Activated naive CD8-positive, alpha-beta T cell treated with anti-CD3 and anti-CD28 coated beads, Interleukin-2, amount 10 ng/mL, durations not matched to agents 7 days and 5 days (primary cell): ENCODE measurements at regions of chr11 and their contacts with region 1.

Region 1: DNA sequence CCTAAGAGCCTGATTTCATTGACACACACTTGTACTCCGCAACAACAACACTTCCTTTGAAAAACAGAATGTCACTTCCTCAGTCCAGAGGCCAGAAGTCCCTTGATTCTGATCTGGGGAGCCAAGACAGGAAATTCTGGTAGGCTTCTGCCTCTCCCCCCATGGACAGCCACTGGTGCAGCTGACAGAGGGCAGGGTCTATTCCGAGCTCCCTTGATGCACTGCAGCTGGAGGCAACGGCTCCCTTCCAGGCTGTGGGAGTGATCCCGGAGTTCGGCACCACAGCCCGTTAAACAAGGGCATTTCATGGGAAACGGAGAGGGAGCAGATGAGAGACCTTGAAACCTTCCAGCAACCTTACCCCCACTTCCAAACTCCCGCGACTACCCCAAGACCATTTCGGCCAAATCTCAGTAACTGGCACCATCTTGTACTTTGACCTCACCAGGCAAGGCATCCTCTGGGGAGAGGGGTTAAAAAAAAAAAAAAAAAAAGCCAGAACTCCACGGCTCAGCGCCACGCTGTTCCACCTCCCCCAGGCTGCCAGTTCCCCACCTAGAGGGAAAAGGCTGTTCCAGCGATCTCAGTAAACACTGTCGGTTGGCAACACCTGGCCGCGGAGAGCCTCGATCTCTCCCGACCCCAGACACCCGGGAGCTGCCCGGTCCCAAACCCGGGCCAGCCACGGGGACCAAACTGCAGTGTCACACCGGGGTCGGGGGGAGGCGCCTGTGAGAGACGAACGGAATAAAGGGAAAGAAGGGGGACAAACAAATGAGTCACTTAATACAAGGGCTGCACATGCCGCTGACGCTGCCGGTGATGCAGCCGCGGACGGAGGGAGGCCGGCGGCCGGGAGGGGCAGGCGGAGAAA is 1.1 kb downstream of the GAB2 start:
- DNase-seq: peak; percentile 80
- ATAC-seq: peak; percentile 49
- H3K4me3 Mint-ChIP-seq: peak overlapping the region; percentile 93
- H3K27ac Mint-ChIP-seq: peak overlapping the region; percentile 82
- H3K4me1 Mint-ChIP-seq: peaks cover 40% of the 10 kb centered on the region
- H3K27me3 Mint-ChIP-seq: peaks cover 39% of the 10 kb centered on the region

Region 2: DNA sequence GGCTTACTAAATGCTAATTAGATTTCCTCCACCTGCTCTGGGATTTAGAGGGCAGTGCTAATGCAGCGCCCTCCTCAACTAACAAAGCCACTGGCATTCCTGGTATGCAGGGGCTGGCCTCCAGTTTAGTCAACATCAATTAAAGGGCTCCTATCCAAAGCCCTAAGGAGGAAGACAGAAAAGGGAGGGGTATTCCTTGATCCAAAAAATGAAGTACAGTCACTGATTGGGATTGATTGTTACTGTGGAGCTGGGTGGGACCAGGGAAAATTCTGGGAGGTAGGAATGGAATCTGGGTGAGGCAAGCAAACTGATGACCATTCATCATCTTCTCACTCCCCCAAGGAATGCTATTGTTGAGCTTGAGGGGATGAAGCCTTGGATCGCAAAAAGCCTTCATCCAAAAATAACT is 51.2 kb before region 1 on chr11:
- POLR2A ChIA-PET with region 1: no interaction called
- DNase-seq: no peak
- ATAC-seq: no peak
- H3K4me3 Mint-ChIP-seq: no peak overlapping the region
- H3K27ac Mint-ChIP-seq: no peak overlapping the region
- H3K4me1 Mint-ChIP-seq: no peaks in the 10 kb centered on the region
- H3K27me3 Mint-ChIP-seq: peaks cover 2% of the 10 kb centered on the region

Region 3: GRCh38 chr11:78564490-78565467 is 148.2 kb after region 1 on chr11:
- POLR2A ChIA-PET with region 1: interaction called, 13 read pairs
- DNase-seq: no peak
- ATAC-seq: peak; percentile 58
- H3K4me3 Mint-ChIP-seq: no peak overlapping the region
- H3K27ac Mint-ChIP-seq: peak overlapping the region; percentile 44
- H3K4me1 Mint-ChIP-seq: peaks cover 32% of the 10 kb centered on the region
- H3K27me3 Mint-ChIP-seq: no peaks in the 10 kb centered on the region

Region 4: DNA sequence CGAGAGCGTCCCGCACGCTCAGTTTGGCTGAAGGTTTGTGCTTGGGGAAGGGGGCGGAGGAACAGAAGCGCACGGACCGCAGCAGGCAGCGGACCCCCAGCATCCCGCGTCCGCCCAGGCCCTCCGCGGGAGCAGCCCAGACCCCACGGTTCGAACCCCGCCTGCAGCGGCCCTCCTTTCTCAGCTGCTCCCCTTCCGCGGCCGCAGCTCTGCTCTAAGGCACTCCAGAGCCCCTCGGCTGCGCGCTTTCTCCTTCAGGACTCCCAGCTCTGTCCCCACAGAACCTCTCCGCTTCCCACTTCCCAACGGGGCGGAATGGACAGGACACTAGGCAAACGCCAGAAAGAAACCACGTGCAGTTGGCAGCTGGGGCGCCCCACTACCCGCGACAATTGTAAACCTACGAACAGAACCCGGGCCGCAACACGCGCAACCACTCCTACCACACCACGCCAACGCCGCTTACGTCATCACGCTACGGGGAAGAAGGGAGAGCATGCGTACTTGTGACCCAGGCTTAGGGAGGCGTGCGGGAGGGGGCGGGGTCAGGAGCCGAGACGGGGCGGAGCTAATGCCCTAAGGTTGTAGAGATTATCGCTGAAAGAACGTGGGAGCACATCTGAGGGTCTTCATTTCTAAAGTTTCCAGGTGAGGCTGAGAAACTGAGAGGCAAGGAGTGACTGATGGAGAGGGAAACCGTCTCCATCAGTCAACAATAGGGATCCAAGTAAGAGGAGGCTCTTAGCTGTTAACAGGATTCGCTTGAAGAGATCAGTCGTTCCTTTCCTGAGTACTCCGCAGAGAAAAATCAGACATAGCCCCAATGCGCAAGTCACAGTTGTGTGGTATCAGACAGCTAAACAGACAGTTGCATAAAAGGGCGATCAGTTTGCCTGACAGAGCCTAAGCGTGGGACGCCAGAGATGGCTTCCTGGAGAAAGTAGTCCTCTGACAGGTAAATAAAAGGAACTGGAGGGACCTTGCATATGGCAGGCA is 158.1 kb after region 1 on chr11 and contains the start of gene NARS2:
- POLR2A ChIA-PET with region 1: interaction called, 16 read pairs
- DNase-seq: peak; percentile 94
- ATAC-seq: peak; percentile 98
- H3K4me3 Mint-ChIP-seq: peak within 1 kb of the TSS; percentile 99
- H3K27ac Mint-ChIP-seq: peak within 1 kb of the TSS; percentile 91
- H3K4me1 Mint-ChIP-seq: peaks cover 27% of the 10 kb centered on the region
- H3K27me3 Mint-ChIP-seq: no peaks in the 10 kb centered on the region
- total RNA-seq, gene NARS2: 12.8 to 14.5 TPM